ENCODE measurements at regions of chr22 and their contacts with region 1.

Region 1: DNA sequence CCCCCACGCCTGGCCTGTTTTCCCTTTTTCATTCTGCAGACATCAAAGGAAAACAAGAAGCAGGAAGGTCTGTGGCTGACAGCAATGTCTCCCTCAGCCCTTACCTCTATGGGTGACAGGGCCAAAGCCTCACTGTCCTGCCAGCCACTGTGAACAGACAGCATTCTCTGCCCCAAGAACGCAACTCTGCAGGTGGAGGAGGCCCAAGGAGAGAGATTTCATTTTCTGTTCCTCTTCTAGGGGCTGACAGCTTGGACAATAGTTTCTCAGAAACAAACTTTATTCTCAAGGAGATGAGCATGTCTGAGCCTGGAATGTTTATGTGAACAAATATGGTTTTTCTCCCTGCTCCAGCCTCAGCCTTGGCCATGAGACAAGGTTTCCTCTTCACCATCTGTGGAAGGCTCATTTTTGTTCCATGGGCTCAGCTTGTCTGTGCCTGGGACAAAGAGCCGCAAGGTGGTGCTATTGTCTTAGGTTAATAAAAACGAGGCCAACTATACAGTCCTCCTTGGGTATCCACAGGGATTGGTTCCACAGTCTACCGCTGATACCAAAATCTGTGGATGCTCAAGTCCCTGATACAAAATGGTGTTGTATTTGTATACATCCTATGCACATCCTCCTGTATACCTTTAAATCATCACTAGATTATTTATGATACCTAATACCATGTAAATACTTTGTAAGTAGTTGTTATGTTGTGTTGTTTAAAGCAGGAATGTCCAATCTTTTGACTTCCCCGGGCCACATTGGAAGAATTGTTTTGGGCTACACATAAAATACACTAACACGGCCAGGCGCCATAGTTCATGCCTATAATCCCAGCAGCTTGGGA is 5.8 kb downstream of the PIWIL3 start:
- DNase-seq: peak; percentile 57
- ATAC-seq: peak; percentile 84

Region 2: GRCh38 chr22:24848559-24849168 is 79.9 kb after region 1 on chr22:
- intact Hi-C with region 1: loop called (anchors 2 kb)
- DNase-seq: no peak
- ATAC-seq: no peak

Region 3: DNA sequence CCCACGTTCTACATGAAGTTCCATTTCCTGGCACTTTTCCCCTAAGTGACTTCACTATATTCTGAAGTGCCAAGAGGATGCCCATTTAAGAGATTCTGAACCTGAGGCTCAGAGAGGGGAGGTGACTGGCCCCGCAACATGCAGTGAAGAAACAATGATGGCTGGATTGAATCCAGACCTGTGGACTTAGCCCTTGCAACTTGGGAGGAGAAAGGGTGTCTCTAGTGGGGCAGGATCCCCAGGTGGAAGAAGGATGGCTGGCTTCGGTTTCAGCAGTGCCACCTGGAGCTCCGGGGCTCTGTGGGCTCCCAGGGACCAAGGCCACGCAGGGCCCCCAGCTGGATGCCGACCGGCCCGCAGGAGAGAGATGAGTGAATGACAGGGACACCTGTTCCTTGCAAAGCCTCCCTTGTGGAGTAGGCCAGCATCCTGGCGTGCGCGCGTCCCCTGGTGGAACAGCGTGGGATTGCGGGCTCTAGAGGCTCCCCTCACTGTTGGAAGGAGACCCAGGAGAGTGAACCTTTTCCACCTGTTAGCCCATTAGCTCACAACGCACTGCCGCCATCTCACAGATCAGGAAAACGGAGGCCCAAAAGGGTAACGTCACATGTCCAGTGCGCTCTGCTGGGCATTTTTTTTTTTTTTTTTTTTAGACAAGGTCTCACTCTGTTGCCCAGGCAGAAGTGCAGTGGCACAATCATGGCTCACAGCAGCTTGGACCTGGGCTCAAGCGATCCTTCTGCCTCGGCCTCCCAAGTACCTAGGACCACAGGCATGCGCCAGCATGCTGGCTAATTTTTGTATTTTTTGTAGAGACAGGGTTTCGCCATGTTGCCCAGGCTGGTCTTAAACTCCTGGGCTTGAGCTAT is 288.5 kb after region 1 on chr22:
- intact Hi-C with region 1: loop called (anchors 10 kb)
- DNase-seq: peak; percentile 78
- ATAC-seq: peak; percentile 80